ENCODE measurements at regions of chr5 and their contacts with region 1.

Region 1: DNA sequence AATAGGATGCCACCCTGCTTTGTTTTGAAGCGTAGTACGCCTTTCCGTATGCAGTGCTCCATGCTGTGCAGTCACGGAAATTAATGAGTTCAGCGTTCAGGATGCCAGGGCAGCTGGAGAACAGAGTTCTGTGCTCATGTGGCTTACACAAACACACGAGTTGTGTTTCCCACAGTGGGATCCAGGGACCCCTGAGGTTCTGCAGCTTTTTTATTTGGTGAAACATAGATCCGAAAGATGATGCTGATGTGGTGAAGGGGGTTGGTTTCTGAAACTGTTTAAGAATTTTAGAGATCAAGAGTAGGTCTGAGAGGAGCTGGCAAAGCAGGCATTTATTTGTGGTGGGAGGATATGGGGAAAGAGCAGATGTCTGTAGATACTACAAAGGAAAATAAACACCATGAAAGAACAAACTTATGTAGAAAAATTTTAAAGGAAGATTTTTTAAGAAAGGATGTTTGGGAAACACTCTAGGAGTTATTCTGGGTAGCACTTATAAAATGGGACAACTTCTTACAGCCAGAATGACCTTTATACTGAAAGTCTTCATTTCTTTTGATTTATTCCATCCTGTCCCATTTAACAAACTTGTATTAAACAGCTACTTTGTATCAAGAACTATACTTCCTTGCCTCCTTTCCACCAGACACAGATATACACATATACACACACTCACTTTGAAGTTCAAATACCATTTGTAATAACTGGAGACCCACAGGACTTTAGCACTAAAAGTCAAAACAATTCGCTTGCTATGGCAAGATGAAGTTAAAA is 52.7 kb downstream of the ITGA1 start:
- DNase-seq: peak; percentile 4
- H3K4me3 ChIP-seq: no peak overlapping the region
- H3K27ac ChIP-seq: no peak overlapping the region; a peak in 1 of 4 replicates
- H3K4me1 ChIP-seq: peaks cover 5 to 12% of the 10 kb centered on the region in 2 experiments; a peak in 3 of 4 replicates
- H3K27me3 ChIP-seq: no peaks in the 10 kb centered on the region
- CTCF ChIP-seq: no peak
- EP300 ChIP-seq: no peak
- RAD21 ChIP-seq: no peak

Region 2: DNA sequence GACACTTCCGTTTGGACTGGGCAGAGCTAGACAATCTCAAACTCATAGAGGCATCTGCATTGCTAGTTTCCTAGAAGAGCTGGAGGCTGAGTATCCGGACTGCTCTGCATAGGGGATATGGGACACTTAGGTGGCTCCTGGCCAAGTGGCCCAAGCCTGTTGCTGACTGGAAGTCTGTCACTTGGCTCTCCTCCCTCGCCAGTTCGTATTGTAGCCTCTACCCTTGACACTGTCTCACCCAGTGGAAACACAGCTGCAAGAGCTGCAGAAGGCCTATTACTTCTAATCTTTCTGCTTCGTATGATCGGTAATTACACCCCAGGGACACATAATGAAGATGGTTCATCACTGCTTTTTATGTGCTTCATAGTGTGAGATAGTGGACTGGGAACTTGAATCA is 18.0 kb before region 1 on chr5:
- CTCF ChIA-PET with region 1: interaction called, 11 read pairs
- POLR2A ChIA-PET with region 1: no interaction called
- DNase-seq: no peak
- H3K4me3 ChIP-seq: no peak overlapping the region
- H3K27ac ChIP-seq: no peak overlapping the region; a peak in 1 of 4 replicates
- H3K4me1 ChIP-seq: peaks cover 0 to 4% of the 10 kb centered on the region in 2 experiments; a peak in 1 of 4 replicates
- H3K27me3 ChIP-seq: no peaks in the 10 kb centered on the region
- CTCF ChIP-seq: no peak
- EP300 ChIP-seq: no peak
- RAD21 ChIP-seq: no peak

Region 3: DNA sequence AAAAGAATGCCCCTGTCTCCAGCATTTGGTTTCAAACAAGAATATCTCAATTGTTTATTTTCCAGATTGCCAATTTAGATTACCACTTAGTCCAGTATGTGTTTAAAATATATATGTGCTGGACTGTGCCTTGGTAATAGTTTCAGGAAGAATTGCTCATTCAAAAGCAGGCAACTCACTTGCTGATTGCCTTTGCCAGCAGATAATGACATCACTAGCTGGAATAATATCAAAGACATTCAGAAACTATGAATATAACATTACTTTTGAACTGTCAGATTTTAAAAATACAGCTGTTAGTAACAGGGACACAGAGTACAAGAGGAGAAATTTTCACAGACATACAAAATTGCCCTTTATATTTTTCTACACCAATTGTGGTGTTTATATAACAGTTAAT is 52.6 kb after region 1 on chr5:
- CTCF ChIA-PET with region 1: no interaction called
- POLR2A ChIA-PET with region 1: no interaction called
- DNase-seq: no peak
- H3K4me3 ChIP-seq: no peak overlapping the region
- H3K27ac ChIP-seq: peak overlapping the region; percentile 43 to 47; a peak in 3 of 4 replicates
- H3K4me1 ChIP-seq: peaks cover 6 to 22% of the 10 kb centered on the region in 2 experiments; a peak in 3 of 4 replicates
- H3K27me3 ChIP-seq: no peaks in the 10 kb centered on the region
- CTCF ChIP-seq: no peak
- EP300 ChIP-seq: 0 out of 4 replicates have a peak, but pooled peaks of 1 of the 2 experiments have one; percentile 19
- RAD21 ChIP-seq: no peak

Measured in SK-N-SH (cell line).